Activated T-helper 1 cell treated with anti-CD3 and anti-CD28 coated beads, Interleukin-12 subunit alpha, Interleukin-12 subunit beta, Interleukin-2, Interleukin-4 antibody, amounts not matched to agents 30 ng/mL and 10 ng/mL and 1 ng/mL, durations not matched to agents 14 hours and 24 hours and 36 hours (primary cell): ENCODE measurements at regions of chr19 and their contacts with region 1.

Region 1: DNA sequence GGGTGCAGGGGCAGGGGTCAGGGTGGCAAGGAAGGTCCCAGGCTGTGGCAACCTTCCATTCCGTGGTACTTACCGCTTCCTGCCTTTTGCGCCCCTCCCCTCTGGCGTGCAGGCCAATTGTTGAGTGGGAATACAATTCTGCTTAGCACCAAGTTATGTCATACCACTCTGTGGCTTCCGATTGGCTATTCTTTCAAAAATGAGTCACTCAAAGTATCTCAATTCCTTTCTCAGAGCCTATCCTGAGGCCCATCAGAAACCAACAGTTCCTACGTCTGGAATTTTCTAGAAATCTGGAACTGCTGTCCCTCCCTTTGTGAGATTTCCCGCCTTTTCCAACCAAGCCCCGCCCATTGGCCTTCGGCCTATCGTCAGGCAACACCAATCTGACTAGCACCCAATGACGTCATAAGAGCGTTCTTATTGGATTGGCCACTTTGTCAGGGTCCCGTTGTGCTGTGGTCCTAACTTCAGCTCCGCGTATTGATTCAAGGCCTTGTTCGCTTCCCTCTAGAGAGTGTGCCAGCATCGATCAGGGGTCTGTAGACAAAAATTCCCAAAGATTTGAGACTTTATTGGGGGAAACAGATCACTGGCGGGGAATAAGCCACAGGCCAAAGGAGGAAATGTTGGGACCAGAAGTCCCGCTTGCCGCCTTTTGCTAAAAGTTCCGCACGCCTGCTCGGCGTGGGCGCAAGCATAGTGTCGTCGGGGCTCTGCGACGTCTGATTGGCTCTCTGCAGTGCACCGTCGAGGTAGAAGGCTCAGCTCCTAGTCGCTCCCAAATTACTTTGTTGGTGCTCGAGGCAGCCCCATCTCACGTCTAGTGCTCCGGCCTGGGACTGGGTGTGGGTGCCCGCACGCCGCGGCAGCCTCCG is 11.7 kb downstream of the NTN5 start:
- DNase-seq: peak; percentile 77
- H3K4me3 Mint-ChIP-seq: peak overlapping the region; percentile 54
- H3K27ac Mint-ChIP-seq: peak overlapping the region; percentile 91
- H3K4me1 Mint-ChIP-seq: peaks cover 9% of the 10 kb centered on the region
- H3K27me3 Mint-ChIP-seq: peaks cover 5% of the 10 kb centered on the region

Region 2: DNA sequence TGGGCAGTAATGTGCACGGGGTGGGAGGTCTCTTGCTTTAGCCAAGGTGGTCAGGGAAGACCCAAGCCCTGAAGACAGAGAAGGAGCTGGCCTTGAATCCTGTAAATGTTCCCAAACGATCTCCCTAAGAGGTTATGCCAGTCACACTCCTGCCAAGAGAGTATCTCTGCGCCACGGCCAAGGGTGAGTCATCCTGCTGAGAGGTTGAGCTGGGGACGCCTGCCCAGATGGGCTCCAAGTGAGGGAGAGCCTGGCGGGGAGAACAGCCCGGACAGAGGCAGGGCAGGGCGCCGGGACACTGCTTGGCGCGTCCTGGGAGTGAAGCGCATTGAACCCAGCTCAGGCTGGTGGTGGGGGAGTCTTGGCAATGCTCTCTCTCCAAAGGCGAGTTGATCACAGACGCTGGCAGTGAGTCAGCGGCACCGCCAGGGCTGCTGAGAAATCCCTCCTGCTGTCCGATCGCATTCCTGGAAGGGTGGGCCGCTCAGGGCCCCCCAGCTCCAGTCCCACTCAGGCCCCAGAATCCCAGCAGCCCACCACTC is 92.7 kb before region 1 on chr19:
- intact Hi-C with region 1: no loop called
- DNase-seq: no peak
- H3K4me3 Mint-ChIP-seq: no peak overlapping the region
- H3K27ac Mint-ChIP-seq: no peak overlapping the region
- H3K4me1 Mint-ChIP-seq: no peaks in the 10 kb centered on the region
- H3K27me3 Mint-ChIP-seq: peaks cover 3% of the 10 kb centered on the region

Region 3: GRCh38 chr19:48624067-48624594 is 37.0 kb before region 1 on chr19:
- intact Hi-C with region 1: loop called (anchors 2 kb)
- DNase-seq: peak; percentile 97
- H3K4me3 Mint-ChIP-seq: peak overlapping the region; percentile 83
- H3K27ac Mint-ChIP-seq: peak overlapping the region; percentile 94
- H3K4me1 Mint-ChIP-seq: peaks cover 39% of the 10 kb centered on the region
- H3K27me3 Mint-ChIP-seq: no peaks in the 10 kb centered on the region

Region 4: DNA sequence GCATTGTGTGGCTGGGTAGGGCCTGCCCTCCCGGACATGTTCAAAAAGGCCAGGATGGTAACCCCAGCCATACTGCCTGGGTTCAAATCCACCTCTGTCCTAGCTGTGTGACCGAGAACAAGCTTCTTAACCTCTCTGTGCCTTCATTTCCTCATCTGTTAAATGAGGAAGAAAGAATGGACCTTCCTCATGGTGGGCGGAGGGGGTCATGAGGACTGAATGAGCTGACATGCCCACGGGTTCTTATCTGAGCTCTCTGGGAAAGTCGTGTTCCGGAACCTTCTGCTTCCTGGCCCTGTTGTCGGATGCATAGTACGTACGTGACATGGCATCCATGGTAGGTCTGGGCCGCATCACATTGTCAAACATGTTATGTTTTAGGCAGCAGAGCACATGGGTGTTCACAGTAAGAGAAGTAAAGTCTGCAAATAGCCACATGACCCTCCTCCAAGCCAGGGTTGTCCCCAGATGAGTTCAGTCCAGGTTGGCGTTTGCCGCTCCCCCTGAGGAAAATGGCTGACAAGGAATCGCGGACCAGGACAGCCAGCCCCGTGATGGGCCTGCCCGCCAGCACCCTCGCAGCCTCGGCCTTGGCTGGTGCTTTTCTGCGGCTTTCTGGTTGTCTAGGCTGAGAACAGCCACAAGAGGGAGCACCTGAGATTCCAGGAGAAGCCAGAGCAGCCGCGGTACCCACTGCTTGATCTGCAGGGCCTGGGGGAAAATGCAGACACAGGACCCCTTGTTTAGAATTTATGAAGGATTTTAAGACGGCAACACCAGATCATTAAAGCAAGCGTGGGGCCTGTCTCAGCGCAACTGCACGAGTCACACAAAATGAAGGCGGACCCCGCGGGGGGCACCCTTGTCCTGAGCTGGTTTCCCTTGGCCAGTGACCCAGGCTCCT is 14.1 kb after region 1 on chr19:
- intact Hi-C with region 1: loop called (anchors 1 kb)
- DNase-seq: peak; percentile 69
- H3K4me3 Mint-ChIP-seq: no peak overlapping the region
- H3K27ac Mint-ChIP-seq: no peak overlapping the region
- H3K4me1 Mint-ChIP-seq: peaks cover 8% of the 10 kb centered on the region
- H3K27me3 Mint-ChIP-seq: peaks cover 4% of the 10 kb centered on the region

Region 5: GRCh38 chr19:48713864-48714758 is 53.0 kb after region 1 on chr19:
- intact Hi-C with region 1: loop called (anchors 1 kb)
- DNase-seq: peak; percentile 98
- H3K4me3 Mint-ChIP-seq: peak overlapping the region; percentile 80
- H3K27ac Mint-ChIP-seq: peak overlapping the region; percentile 83
- H3K4me1 Mint-ChIP-seq: peaks cover 8% of the 10 kb centered on the region
- H3K27me3 Mint-ChIP-seq: peaks cover 1% of the 10 kb centered on the region